Lower leg skin (tissue), 4 donors: ENCODE measurements at regions of chr11 and their contacts with region 1.

Region 1: GRCh38 chr11:11349870-11350337 is 3.1 kb downstream of the CSNK2A3 start:
- DNase-seq: no peak
- H3K4me3 ChIP-seq: no peak overlapping the region
- CTCF ChIP-seq: no peak
- POLR2A ChIP-seq: no peak

Region 2: DNA sequence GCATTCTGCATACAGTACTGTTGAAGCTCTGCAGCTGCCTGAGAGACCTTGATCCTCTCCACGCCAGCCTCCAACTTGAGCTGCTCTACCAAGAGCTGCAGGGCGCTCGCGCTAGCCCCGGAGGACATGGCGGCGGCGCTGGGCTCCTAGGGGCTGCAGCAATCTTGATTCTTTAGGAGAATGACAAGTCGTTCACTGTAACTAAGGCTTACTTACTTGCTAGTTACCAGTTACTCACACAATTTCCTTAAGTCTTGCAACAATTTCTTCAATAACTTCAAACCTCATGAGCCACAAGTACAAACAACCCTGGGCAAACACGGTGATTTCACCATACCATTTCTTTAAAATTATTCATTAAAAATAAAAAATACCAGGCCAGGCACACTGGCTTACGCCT is 1077.8 kb before region 1 on chr11:
- intact Hi-C with region 1: loop called (anchors 10 kb)
- DNase-seq: no peak
- H3K4me3 ChIP-seq: no peak overlapping the region
- CTCF ChIP-seq: no peak
- POLR2A ChIP-seq: no peak